Breast epithelium (tissue), 4 donors: ENCODE measurements at regions of chr16 and their contacts with region 1.

Region 1: GRCh38 chr16:61926766-61927165 is 109.5 kb downstream of the CDH8 start:
- DNase-seq: no peak
- H3K4me3 ChIP-seq: no peak overlapping the region
- H3K27ac ChIP-seq: no peak overlapping the region
- H3K4me1 ChIP-seq: no peaks in the 10 kb centered on the region
- H3K27me3 ChIP-seq: no peaks in the 10 kb centered on the region
- CTCF ChIP-seq: no peak
- POLR2A ChIP-seq: no peak

Region 2: GRCh38 chr16:61370564-61370963 is 556.2 kb before region 1 on chr16:
- intact Hi-C with region 1: loop called (anchors 10 kb)
- DNase-seq: no peak
- H3K4me3 ChIP-seq: no peak overlapping the region
- H3K27ac ChIP-seq: no peak overlapping the region
- H3K4me1 ChIP-seq: no peaks in the 10 kb centered on the region
- H3K27me3 ChIP-seq: peaks cover 0 to 3% of the 10 kb centered on the region in 2 donors
- CTCF ChIP-seq: no peak
- POLR2A ChIP-seq: no peak

Region 3: GRCh38 chr16:61862221-61863155 is 64.3 kb before region 1 on chr16:
- intact Hi-C with region 1: no loop called
- DNase-seq: no peak
- H3K4me3 ChIP-seq: no peak overlapping the region
- H3K27ac ChIP-seq: no peak overlapping the region
- H3K4me1 ChIP-seq: no peaks in the 10 kb centered on the region
- H3K27me3 ChIP-seq: no peaks in the 10 kb centered on the region
- CTCF ChIP-seq: no peak
- POLR2A ChIP-seq: no peak